H1 (cell line): ENCODE measurements at regions of chr12 and their contacts with region 1.

Region 1: GRCh38 chr12:1422604-1423315 is 171.6 kb downstream of the FBXL14 start:
- DNase-seq: no peak
- H3K4me3 ChIP-seq: no peak overlapping the region
- H3K27ac ChIP-seq: no peak overlapping the region
- H3K4me1 ChIP-seq: peaks cover 0 to 7% (median 1%) of the 10 kb centered on the region in 4 experiments; a peak in 3 of 7 replicates
- H3K27me3 ChIP-seq: peaks cover 0 to 11% (median 7%) of the 10 kb centered on the region in 4 experiments; a peak in 6 of 7 replicates
- CTCF ChIP-seq: no peak
- EP300 ChIP-seq: 0 out of 3 replicates have a peak, but pooled peaks of 1 of the 2 experiments have one; percentile 13
- POLR2A ChIP-seq: no peak
- RAD21 ChIP-seq: no peak

Region 2: DNA sequence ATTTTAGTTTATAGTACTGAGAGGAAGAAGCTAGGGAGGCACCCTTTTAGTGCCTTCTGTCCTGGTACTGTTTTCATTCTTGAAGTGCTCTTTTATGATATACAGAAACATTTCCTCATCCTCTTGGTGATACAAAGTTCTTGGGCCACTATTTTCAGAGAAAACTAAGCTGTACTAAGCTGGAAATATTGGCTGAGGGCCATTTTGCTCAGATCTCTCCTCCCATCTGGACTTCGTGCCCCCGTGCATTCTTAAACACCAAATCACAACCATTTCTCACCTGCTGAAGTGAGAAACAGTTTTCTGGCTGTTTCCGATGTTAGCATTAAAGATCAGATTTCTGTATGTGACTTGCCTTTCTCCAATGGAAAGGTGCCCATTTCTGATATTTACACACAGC is 12.7 kb after region 1 on chr12:
- CTCF ChIA-PET with region 1: interaction called, 16 read pairs
- POLR2A ChIA-PET with region 1: no interaction called
- DNase-seq: no peak
- H3K4me3 ChIP-seq: no peak overlapping the region
- H3K27ac ChIP-seq: no peak overlapping the region
- H3K4me1 ChIP-seq: no peaks in the 10 kb centered on the region
- H3K27me3 ChIP-seq: no peaks in the 10 kb centered on the region
- CTCF ChIP-seq: no peak
- EP300 ChIP-seq: no peak
- POLR2A ChIP-seq: no peak
- RAD21 ChIP-seq: no peak

Region 3: GRCh38 chr12:1594261-1595025 is 171.7 kb after region 1 on chr12 and contains the start of gene FBXL14:
- CTCF ChIA-PET with region 1: no interaction called
- POLR2A ChIA-PET with region 1: no interaction called
- DNase-seq: peak in 1 of 2 experiments; percentile 92
- H3K4me3 ChIP-seq: peak within 1 kb of the TSS; percentile 64 to 71 (median 66)
- H3K27ac ChIP-seq: peak within 1 kb of the TSS; percentile 34; the same call in 1 of the 2 replicates
- H3K4me1 ChIP-seq: peaks cover 14 to 34% (median 21%) of the 10 kb centered on the region in 4 experiments
- H3K27me3 ChIP-seq: peaks cover 21 to 61% (median 50%) of the 10 kb centered on the region in 4 experiments
- CTCF ChIP-seq: peak in 1 of 3 experiments; percentile 5; a peak in 1 of 4 replicates
- EP300 ChIP-seq: peak in 1 of 2 experiments; percentile 86; a peak in 1 of 3 replicates
- POLR2A ChIP-seq: peak in 1 of 2 experiments; percentile 28; a peak in 1 of 3 replicates
- RAD21 ChIP-seq: no peak
- total RNA-seq, gene FBXL14: 5.5 and 6.2 TPM in 2 replicates